CD8-positive, alpha-beta T cell (primary cell): ENCODE measurements at regions of chr4 and their contacts with region 1.

Region 1: DNA sequence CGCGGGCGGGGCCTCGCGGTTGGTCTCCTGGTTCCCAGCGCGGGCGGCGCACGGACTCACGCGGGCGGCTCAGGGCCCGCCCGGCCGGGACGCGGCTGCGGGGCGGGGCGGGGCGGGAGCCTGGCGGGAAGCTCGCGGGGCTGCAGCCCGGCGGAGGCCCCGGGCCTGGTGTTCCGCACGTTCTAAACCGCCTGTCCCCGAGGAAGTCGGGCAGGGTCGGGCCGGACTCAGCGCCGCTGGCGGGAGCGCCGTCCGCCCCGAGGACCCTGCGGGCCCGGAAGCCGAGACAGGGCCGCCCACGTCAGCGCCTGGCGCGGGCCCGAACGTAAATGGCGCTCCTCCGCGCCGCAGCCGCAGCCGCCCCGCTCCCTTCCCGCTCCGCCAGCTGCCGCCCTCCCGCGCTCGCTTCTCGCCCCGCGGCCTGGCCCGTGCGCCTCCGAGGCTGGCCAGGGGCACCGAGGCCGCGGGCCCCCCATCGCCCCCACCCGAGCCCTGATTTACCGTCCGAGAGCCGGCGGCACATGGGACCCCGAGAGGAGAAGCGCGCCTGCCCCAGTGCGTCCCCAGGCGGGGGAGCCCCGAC is 309 bp upstream of the CTBP1 start:
- DNase-seq: peak; percentile 71 to 94 (median 85)
- ATAC-seq: peak; percentile 66
- H3K4me3 ChIP-seq: peak overlapping the region; percentile 76 to 82
- H3K4me3 Mint-ChIP-seq: peak overlapping the region; percentile 89
- H3K27ac ChIP-seq: peak overlapping the region; percentile 86 to 93
- H3K27ac Mint-ChIP-seq: peak overlapping the region; percentile 95
- H3K4me1 ChIP-seq: peaks cover 72% of the 10 kb centered on the region
- H3K4me1 Mint-ChIP-seq: peaks cover 69% of the 10 kb centered on the region
- H3K27me3 ChIP-seq: no peaks in the 10 kb centered on the region
- H3K27me3 Mint-ChIP-seq: no peaks in the 10 kb centered on the region
- CTCF ChIP-seq: no peak

Region 2: GRCh38 chr4:1011022-1011694 is 238.1 kb before region 1 on chr4 and contains the start of gene FGFRL1:
- CTCF ChIA-PET with region 1: no interaction called
- POLR2A ChIA-PET with region 1: no interaction called
- intact Hi-C with region 1: loop called in 1 of 2 experiments (anchors 2 kb)
- DNase-seq: peak; percentile 83 to 94 (median 93)
- ATAC-seq: peak; percentile 55
- H3K4me3 ChIP-seq: peak within 1 kb of the TSS; percentile 65 to 86
- H3K4me3 Mint-ChIP-seq: peak within 1 kb of the TSS; percentile 89
- H3K27ac ChIP-seq: peak within 1 kb of the TSS; percentile 65 to 71
- H3K27ac Mint-ChIP-seq: peak within 1 kb of the TSS; percentile 96
- H3K4me1 ChIP-seq: peaks cover 26% of the 10 kb centered on the region
- H3K4me1 Mint-ChIP-seq: peaks cover 12% of the 10 kb centered on the region
- H3K27me3 ChIP-seq: peaks cover 0 to 9% of the 10 kb centered on the region in 2 experiments
- H3K27me3 Mint-ChIP-seq: peaks cover 25% of the 10 kb centered on the region
- CTCF ChIP-seq: no peak
- total RNA-seq, gene FGFRL1: 26.3 to 30.2 TPM

Region 3: DNA sequence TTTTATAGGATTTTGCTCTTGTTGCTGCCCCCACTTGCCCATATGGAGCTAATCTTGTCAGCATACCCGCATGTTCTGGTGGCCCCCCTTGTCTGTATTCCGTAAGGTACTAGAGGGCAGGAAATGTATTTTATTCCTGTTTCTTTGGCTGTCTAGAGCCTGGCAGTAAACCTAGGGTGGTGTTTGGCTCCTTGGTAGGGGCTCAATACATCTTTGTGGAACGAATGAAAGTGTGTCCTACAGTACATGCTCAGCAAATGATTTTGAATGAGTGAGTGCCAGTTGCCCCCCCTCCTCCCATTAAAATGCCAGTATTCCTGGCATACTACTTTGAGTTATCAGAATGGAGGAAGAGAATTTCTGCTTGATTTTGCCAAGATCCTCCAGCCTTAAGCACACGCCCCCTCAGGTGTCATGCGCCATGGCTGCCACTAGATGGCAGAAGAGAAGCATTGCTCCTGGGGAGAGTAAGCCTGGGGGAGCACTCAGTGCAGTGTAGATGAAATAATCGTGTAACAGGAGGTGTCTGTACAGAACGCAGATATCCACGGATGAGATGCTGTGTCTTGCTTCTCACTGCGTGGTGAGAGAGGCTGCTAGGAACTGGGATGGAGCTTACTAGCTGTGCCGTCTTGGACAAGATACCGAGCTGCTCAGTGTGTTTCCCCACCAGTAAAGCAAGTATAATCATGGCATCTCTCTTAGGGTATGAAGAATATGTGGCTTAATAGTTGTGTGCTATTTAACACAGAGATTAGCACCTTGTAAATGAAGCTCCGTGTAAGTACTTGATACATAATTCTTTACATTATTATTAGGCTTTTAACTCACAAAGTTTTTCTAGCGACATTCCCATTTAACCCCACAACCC is 118.7 kb before region 1 on chr4:
- CTCF ChIA-PET with region 1: interaction called, 5 read pairs
- POLR2A ChIA-PET with region 1: no interaction called
- intact Hi-C with region 1: loop called in 1 of 2 experiments (anchors 2 kb)
- DNase-seq: peak; percentile 60 to 88 (median 74)
- ATAC-seq: peak; percentile 100
- H3K4me3 ChIP-seq: no peak overlapping the region
- H3K4me3 Mint-ChIP-seq: no peak overlapping the region
- H3K27ac ChIP-seq: no peak overlapping the region
- H3K27ac Mint-ChIP-seq: no peak overlapping the region
- H3K4me1 ChIP-seq: no peaks in the 10 kb centered on the region
- H3K4me1 Mint-ChIP-seq: peaks cover 4% of the 10 kb centered on the region
- H3K27me3 ChIP-seq: no peaks in the 10 kb centered on the region
- H3K27me3 Mint-ChIP-seq: peaks cover 2% of the 10 kb centered on the region
- CTCF ChIP-seq: peak; percentile 99

Region 4: DNA sequence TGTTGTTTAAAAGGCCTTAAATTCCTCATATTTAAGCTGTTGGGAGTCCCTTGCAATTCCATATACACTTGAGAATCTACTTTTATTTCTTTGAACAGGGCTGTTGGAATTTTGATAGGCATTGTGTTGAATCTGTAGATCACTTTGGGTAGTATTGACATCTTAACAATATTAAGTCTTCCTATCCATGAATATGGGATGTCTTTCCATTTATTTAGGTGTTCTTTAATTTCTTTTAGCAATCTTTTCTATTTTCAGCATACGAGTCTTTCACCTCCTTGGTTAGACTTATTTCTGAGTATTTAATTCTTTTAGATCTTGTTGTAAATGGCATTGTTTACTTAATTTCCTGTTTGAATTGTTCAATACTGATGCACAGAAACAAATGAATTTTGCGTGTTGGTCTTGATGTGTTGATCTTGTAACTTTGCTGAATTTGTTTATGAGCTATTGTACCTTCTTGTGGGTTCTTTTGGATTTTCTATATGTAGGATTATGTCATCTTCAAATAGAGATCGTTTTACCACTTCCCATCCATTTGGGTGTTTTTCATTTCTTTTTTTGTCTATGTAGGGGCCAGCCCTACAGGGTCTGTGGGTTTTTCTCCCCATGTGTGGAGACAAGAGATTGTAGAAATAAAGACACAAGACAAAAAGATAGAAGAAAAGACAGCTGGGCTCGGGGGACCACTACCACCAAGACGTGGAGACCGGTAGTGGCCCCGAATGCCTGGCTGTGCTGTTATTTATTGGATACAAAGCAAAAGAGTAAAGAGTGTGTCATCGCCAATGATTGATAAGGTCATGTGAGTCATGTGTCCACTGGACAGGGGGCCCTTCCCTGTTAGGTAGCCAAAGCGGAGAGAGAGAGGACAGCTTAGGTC is 17.9 kb after region 1 on chr4:
- CTCF ChIA-PET with region 1: interaction called, 30 read pairs
- POLR2A ChIA-PET with region 1: interaction called, 32 read pairs
- intact Hi-C with region 1: loop called (anchors 1 kb)
- DNase-seq: peak in 2 of 9 experiments; percentile 23 to 64
- ATAC-seq: peak; percentile 78
- H3K4me3 ChIP-seq: peak overlapping the region in 1 of 2 experiments; percentile 46
- H3K4me3 Mint-ChIP-seq: peak overlapping the region; percentile 76
- H3K27ac ChIP-seq: peak overlapping the region; percentile 57 to 73
- H3K27ac Mint-ChIP-seq: peak overlapping the region; percentile 93
- H3K4me1 ChIP-seq: peaks cover 12% of the 10 kb centered on the region
- H3K4me1 Mint-ChIP-seq: peaks cover 20% of the 10 kb centered on the region
- H3K27me3 ChIP-seq: no peaks in the 10 kb centered on the region
- H3K27me3 Mint-ChIP-seq: no peaks in the 10 kb centered on the region
- CTCF ChIP-seq: no peak

Region 5: GRCh38 chr4:1448602-1449420 is 199.6 kb after region 1 on chr4:
- CTCF ChIA-PET with region 1: no interaction called
- POLR2A ChIA-PET with region 1: no interaction called
- intact Hi-C with region 1: no loop called
- DNase-seq: no peak
- ATAC-seq: no peak
- H3K4me3 ChIP-seq: no peak overlapping the region
- H3K4me3 Mint-ChIP-seq: no peak overlapping the region
- H3K27ac ChIP-seq: no peak overlapping the region
- H3K27ac Mint-ChIP-seq: no peak overlapping the region
- H3K4me1 ChIP-seq: no peaks in the 10 kb centered on the region
- H3K4me1 Mint-ChIP-seq: no peaks in the 10 kb centered on the region
- H3K27me3 ChIP-seq: no peaks in the 10 kb centered on the region
- H3K27me3 Mint-ChIP-seq: peaks cover 12% of the 10 kb centered on the region
- CTCF ChIP-seq: no peak

Region 6: DNA sequence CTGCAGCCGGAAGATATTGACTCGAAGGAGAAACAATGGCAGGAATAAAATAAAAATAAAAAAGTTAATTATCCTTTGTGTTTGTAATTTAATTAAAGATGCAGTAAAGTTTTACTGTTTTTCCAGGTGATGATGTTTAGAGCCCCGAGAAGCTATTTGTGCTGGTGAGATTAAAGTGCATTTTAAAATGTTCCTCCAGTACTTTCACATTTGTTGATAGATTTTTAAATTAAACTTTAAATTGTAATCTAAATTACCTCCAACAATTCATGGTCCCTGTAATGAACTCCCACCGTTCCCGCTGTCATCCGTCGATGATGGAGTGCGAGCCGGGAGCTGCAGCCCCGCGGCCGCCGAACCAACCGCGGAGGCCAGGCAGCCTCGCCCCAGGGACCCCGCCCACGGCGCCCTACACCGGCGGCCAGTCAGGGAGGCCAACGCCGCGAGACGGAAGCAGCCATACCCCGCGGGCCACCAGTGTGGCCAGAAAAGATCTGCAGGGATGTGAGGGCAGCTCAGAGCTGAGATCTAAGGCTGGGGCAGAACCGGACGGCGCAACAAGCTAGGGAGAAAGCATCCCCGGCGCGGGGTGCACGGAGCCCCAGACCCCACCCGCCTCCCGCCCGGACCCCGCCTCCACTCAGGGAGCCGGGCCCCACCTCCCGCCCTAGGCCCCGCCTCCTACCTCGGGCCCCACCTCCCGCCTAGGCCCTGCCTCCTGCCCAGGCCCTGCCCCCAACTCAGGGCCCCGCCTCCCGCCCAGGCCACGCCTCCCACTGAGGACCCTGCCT is 330.9 kb after region 1 on chr4:
- CTCF ChIA-PET with region 1: no interaction called
- POLR2A ChIA-PET with region 1: no interaction called
- intact Hi-C with region 1: loop called in 1 of 2 experiments (anchors 2 kb)
- DNase-seq: peak; percentile 83 to 96 (median 93)
- ATAC-seq: peak; percentile 82
- H3K4me3 ChIP-seq: peak overlapping the region; percentile 70 to 78
- H3K4me3 Mint-ChIP-seq: peak overlapping the region; percentile 79
- H3K27ac ChIP-seq: peak overlapping the region; percentile 66 to 73
- H3K27ac Mint-ChIP-seq: peak overlapping the region; percentile 79
- H3K4me1 ChIP-seq: no peaks in the 10 kb centered on the region
- H3K4me1 Mint-ChIP-seq: peaks cover 11% of the 10 kb centered on the region
- H3K27me3 ChIP-seq: no peaks in the 10 kb centered on the region
- H3K27me3 Mint-ChIP-seq: no peaks in the 10 kb centered on the region
- CTCF ChIP-seq: no peak

Region 7: GRCh38 chr4:1870578-1871443 is 621.6 kb after region 1 on chr4 and contains the start of gene NSD2:
- CTCF ChIA-PET with region 1: no interaction called
- POLR2A ChIA-PET with region 1: no interaction called
- intact Hi-C with region 1: loop called (anchors 1 to 2 kb)
- DNase-seq: peak; percentile 81 to 97 (median 88)
- ATAC-seq: peak; percentile 64
- H3K4me3 ChIP-seq: peak within 1 kb of the TSS; percentile 66 to 98
- H3K4me3 Mint-ChIP-seq: peak within 1 kb of the TSS; percentile 83
- H3K27ac ChIP-seq: peak within 1 kb of the TSS; percentile 81 to 98
- H3K27ac Mint-ChIP-seq: peak within 1 kb of the TSS; percentile 89
- H3K4me1 ChIP-seq: peaks cover 21% of the 10 kb centered on the region
- H3K4me1 Mint-ChIP-seq: peaks cover 31% of the 10 kb centered on the region
- H3K27me3 ChIP-seq: no peaks in the 10 kb centered on the region
- H3K27me3 Mint-ChIP-seq: no peaks in the 10 kb centered on the region
- CTCF ChIP-seq: no peak
- total RNA-seq, gene NSD2: 27.3 to 32.5 TPM